Activated B cell treated with CpG ODN at 0.5 μM for 24 hours (primary cell): ENCODE measurements at regions of chr2 and their contacts with region 1.

Region 1: DNA sequence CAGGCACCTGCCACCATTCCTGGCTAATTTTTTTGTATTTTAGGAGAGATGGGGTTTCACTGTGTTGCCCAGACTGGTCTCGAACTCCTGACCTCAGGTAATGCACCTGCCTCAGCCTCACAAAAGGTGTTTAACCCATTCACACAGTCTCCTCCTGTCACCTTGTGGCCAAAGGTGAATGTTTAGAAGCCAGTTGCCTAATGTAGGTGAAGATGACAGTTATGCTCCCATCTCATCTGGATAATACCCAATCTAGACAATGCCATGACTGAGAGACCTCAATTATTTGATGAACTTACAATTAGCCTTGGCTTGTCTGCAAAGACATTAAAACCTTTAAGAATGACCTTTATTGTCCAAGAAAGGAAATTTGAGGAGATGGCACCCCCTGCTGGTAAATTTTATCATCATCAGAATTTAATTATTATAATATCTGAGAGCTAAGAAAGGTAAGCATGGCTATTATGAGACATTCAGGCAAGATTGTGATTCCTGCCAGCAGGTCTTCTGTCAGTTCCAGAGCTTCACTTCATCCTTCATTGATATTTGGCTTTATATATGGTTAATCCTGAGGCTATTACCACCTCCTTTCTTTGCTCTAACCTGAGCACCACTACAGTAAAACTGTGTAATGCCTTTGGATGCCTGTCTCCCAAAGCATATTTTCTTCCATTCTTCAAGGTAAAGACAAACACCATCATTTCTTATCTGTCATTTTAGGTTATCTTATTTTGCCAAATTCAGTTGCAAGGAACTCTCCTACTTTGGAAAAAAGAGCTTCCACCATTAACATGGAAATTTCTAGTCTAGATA is 117.6 kb downstream of the FAM124B start:
- DNase-seq: no peak
- ATAC-seq: no peak
- H3K4me3 Mint-ChIP-seq: no peak overlapping the region
- H3K27ac Mint-ChIP-seq: no peak overlapping the region
- H3K4me1 Mint-ChIP-seq: no peaks in the 10 kb centered on the region
- H3K27me3 Mint-ChIP-seq: peaks cover 23% of the 10 kb centered on the region
- CTCF ChIP-seq: peak; percentile 58

Region 2: GRCh38 chr2:222969491-222969890 is 1314.8 kb before region 1 on chr2:
- CTCF ChIA-PET with region 1: interaction called, 19 read pairs
- POLR2A ChIA-PET with region 1: no interaction called
- intact Hi-C with region 1: loop called (anchors 1 kb)
- DNase-seq: no peak
- ATAC-seq: no peak
- H3K4me3 Mint-ChIP-seq: no peak overlapping the region
- H3K27ac Mint-ChIP-seq: no peak overlapping the region
- H3K4me1 Mint-ChIP-seq: no peaks in the 10 kb centered on the region
- H3K27me3 Mint-ChIP-seq: peaks cover 5% of the 10 kb centered on the region
- CTCF ChIP-seq: no peak

Region 3: GRCh38 chr2:223727562-223727961 is 556.8 kb before region 1 on chr2:
- CTCF ChIA-PET with region 1: interaction called, 9 read pairs
- POLR2A ChIA-PET with region 1: no interaction called
- intact Hi-C with region 1: loop called (anchors 1 kb)
- DNase-seq: no peak
- ATAC-seq: peak; percentile 65
- H3K4me3 Mint-ChIP-seq: no peak overlapping the region
- H3K27ac Mint-ChIP-seq: no peak overlapping the region
- H3K4me1 Mint-ChIP-seq: no peaks in the 10 kb centered on the region
- H3K27me3 Mint-ChIP-seq: no peaks in the 10 kb centered on the region
- CTCF ChIP-seq: peak; percentile 20

Region 4: GRCh38 chr2:223970343-223971128 is 313.8 kb before region 1 on chr2:
- CTCF ChIA-PET with region 1: interaction called, 134 read pairs
- POLR2A ChIA-PET with region 1: interaction called, 3 read pairs
- intact Hi-C with region 1: loop called (anchors 1 kb)
- DNase-seq: no peak
- ATAC-seq: peak; percentile 64
- H3K4me3 Mint-ChIP-seq: no peak overlapping the region
- H3K27ac Mint-ChIP-seq: no peak overlapping the region
- H3K4me1 Mint-ChIP-seq: peaks cover 3% of the 10 kb centered on the region
- H3K27me3 Mint-ChIP-seq: no peaks in the 10 kb centered on the region
- CTCF ChIP-seq: peak; percentile 90

Region 5: GRCh38 chr2:224272237-224272910 is 12.0 kb before region 1 on chr2:
- CTCF ChIA-PET with region 1: interaction called, 14 read pairs
- POLR2A ChIA-PET with region 1: no interaction called
- intact Hi-C with region 1: no loop called
- DNase-seq: no peak
- ATAC-seq: no peak
- H3K4me3 Mint-ChIP-seq: no peak overlapping the region
- H3K27ac Mint-ChIP-seq: no peak overlapping the region
- H3K4me1 Mint-ChIP-seq: no peaks in the 10 kb centered on the region
- H3K27me3 Mint-ChIP-seq: peaks cover 13% of the 10 kb centered on the region
- CTCF ChIP-seq: no peak